ENCODE measurements at regions of chr6 and their contacts with region 1.

Region 1: GRCh38 chr6:167212713-167213005 is 54.9 kb upstream of the GPR31 start:
- DNase-seq: peak in 1 of 2 donors; percentile 58
- H3K4me3 ChIP-seq: no peak overlapping the region
- CTCF ChIP-seq: no peak
- POLR2A ChIP-seq: no peak

Region 2: DNA sequence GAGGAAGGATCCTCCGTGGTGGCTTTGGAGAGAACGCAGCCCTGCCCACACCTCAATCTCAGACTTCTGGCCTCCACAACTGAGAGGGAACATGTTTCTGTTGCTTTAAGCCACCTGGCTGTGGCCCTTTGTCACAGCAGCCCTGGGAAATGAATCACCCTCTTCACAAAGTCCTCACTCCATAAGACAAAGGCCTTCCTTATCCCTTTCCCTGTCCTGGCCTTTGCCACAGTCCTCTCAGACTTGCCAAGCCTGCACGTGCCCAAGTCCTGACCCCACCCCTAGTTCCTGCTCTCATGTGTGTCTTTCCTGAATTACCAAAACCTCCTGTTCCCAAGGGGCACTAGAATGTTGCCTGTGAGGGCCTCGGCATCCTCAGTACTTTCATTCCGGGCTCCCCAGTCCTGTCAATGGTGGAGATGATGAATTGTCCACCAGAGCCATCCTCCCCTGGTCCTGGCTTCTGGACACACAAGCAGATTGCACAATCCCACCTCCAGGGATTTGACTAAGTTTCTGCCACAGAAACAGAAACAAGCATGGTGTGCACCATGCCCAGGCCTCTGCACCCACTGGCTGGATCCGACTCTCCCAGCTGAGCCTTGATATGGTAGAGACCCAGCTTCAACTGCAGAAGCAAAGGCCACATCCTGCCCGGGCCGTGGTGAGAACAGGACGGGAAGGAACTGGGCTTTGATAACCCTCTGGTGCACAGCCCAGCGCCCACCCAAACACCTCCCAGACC is 1317.1 kb before region 1 on chr6:
- intact Hi-C with region 1: loop called (anchors 5 kb)
- DNase-seq: no peak
- H3K4me3 ChIP-seq: no peak overlapping the region
- CTCF ChIP-seq: no peak
- POLR2A ChIP-seq: no peak

Measured in lower leg skin (tissue), 4 donors.